Mammary epithelial cell (primary cell): ENCODE measurements at regions of chr15 and their contacts with region 1.

Region 1: GRCh38 chr15:41621200-41622193 is 38.7 kb upstream of the MGA start:
- DNase-seq: peak; percentile 65
- H3K4me3 ChIP-seq: peak overlapping the region; percentile 38 to 60 (median 51)
- H3K27ac ChIP-seq: no peak overlapping the region
- H3K4me1 ChIP-seq: peaks cover 7% of the 10 kb centered on the region
- H3K27me3 ChIP-seq: no peaks in the 10 kb centered on the region
- CTCF ChIP-seq: no peak

Region 2: GRCh38 chr15:41096178-41096577 is 525.3 kb before region 1 on chr15:
- CTCF ChIA-PET with region 1: no interaction called
- dilution Hi-C with region 1: no loop called
- in situ Hi-C with region 1: no loop called
- intact Hi-C with region 1: no loop called
- DNase-seq: no peak
- H3K4me3 ChIP-seq: no peak overlapping the region
- H3K27ac ChIP-seq: no peak overlapping the region
- H3K4me1 ChIP-seq: no peaks in the 10 kb centered on the region
- H3K27me3 ChIP-seq: no peaks in the 10 kb centered on the region
- CTCF ChIP-seq: no peak

Region 3: GRCh38 chr15:41462084-41462795 is 159.3 kb before region 1 on chr15:
- CTCF ChIA-PET with region 1: no interaction called
- dilution Hi-C with region 1: no loop called
- in situ Hi-C with region 1: no loop called
- intact Hi-C with region 1: no loop called
- DNase-seq: no peak
- H3K4me3 ChIP-seq: no peak overlapping the region
- H3K27ac ChIP-seq: no peak overlapping the region
- H3K4me1 ChIP-seq: no peaks in the 10 kb centered on the region
- H3K27me3 ChIP-seq: no peaks in the 10 kb centered on the region
- CTCF ChIP-seq: no peak

Region 4: GRCh38 chr15:41660235-41661077 is 39.0 kb after region 1 on chr15 and contains the start of gene MGA:
- CTCF ChIA-PET with region 1: no interaction called
- dilution Hi-C with region 1: no loop called
- in situ Hi-C with region 1: no loop called
- intact Hi-C with region 1: loop called (anchors 2 kb)
- DNase-seq: peak; percentile 89
- H3K4me3 ChIP-seq: peak within 1 kb of the TSS; percentile 43 to 62 (median 53)
- H3K27ac ChIP-seq: peak within 1 kb of the TSS; percentile 36
- H3K4me1 ChIP-seq: peaks cover 23% of the 10 kb centered on the region
- H3K27me3 ChIP-seq: no peaks in the 10 kb centered on the region
- CTCF ChIP-seq: no peak
- total RNA-seq, gene MGA: 22.8 to 30.3 TPM

Region 5: DNA sequence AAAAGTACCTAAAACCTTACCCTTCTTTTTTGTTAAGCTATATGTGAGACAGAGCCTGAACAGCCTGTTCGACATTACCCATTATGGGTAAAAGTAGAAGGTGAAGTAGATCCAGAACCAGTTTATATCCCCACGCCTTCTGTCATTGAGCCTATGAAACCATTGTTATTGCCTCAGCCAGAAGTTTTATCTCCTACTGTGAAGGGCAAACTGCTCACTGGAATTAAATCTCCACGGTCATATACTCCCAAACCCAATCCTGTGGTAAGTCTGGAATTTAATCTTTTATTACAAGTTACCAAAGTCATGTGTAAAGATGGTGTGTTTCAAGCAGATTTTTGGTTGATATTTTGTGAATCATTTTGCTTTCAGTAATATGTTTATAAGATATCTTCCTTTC is 105.6 kb after region 1 on chr15:
- CTCF ChIA-PET with region 1: no interaction called
- dilution Hi-C with region 1: no loop called
- in situ Hi-C with region 1: no loop called
- intact Hi-C with region 1: no loop called
- DNase-seq: no peak
- H3K4me3 ChIP-seq: no peak overlapping the region
- H3K27ac ChIP-seq: no peak overlapping the region
- H3K4me1 ChIP-seq: no peaks in the 10 kb centered on the region
- H3K27me3 ChIP-seq: no peaks in the 10 kb centered on the region
- CTCF ChIP-seq: no peak

Region 6: GRCh38 chr15:41944313-41944940 is 322.9 kb after region 1 on chr15:
- CTCF ChIA-PET with region 1: no interaction called
- dilution Hi-C with region 1: no loop called
- in situ Hi-C with region 1: no loop called
- intact Hi-C with region 1: no loop called
- DNase-seq: peak; percentile 77
- H3K4me3 ChIP-seq: no peak overlapping the region
- H3K27ac ChIP-seq: peak overlapping the region; percentile 50
- H3K4me1 ChIP-seq: peaks cover 84% of the 10 kb centered on the region
- H3K27me3 ChIP-seq: no peaks in the 10 kb centered on the region
- CTCF ChIP-seq: no peak